Dorsolateral prefrontal cortex (tissue), 120 donors: ENCODE measurements at regions of chr10 and their contacts with region 1.

Region 1: DNA sequence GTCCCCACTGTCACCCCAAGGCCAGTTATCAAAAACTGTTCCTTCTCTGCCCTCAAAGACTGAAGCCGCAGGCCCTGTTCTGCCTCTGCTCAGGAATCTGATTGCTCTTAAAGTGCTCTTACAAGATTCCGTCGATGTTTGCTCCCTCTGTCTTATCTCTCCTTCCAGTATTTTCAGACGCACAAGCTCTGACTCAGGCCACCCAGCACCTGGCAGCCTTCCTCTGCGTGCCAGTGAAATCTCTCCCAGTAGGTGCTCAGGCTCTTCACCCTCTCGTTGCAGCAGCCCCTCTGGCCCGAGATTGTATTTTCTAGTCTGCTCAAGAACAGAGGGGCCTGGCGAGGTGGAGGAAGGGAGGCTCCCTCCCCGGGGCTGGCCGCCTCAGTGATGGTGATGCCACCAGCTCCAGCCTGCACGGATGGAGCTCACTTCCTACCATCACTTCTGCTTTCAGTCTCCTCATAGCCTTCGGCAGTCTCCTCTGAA is 276.2 kb downstream of the USP6NL start:
- DNase-seq: no peak
- H3K4me3 ChIP-seq: peak overlapping the region in 1 of 59 donors; percentile 17
- H3K27ac ChIP-seq: peak overlapping the region in 43 of 59 donors; percentile 2 to 79 (median 61)
- H3K27me3 ChIP-seq: no peaks in the 10 kb centered on the region
- CTCF ChIP-seq: no peak

Region 2: DNA sequence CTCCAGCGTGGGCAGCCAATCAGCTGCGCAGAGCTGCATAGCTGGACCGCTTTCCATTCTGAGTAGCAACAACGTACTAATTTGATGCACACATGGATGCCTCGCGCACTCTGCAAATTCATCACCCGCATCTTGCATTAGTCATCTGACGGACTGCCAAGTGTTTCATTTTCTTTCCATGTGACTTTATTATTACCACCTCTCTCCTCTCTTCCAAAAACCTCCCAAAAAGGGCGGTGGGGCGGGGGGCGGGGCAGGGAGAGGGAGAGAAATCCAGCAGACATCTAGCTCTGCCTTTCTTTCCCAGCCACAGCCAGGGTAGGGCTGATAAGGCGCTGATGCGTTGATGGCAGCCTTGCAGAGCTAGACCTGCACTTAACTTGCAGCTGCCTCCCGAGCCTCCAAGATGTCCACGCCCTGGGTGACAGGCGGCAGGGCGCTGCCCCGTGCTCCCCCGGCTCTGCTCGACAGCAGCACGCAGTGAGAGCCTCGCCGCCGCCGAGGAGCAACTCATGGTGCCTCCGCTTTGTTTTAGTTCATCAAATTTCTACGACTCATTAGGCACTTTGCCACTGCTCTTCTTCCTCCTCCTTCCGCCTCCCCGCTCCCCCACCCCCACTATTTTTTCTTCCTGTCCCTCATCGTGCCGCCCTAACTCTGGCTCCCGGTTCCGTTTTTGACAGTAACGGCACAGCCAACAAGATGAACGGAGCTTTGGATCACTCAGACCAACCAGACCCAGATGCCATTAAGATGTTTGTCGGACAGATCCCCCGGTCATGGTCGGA is 170.2 kb before region 1 on chr10:
- intact Hi-C with region 1: loop called in 1 of 2 experiments (anchors 5 kb)
- DNase-seq: peak; percentile 42 to 86 (median 80)
- H3K4me3 ChIP-seq: peak overlapping the region; percentile 35 to 85 (median 73)
- H3K27ac ChIP-seq: peak overlapping the region in 58 of 59 donors; percentile 14 to 95 (median 83)
- H3K27me3 ChIP-seq: peaks cover 0 to 21% (median 0%) of the 10 kb centered on the region in 45 donors
- CTCF ChIP-seq: no peak

Region 3: GRCh38 chr10:11367505-11367904 is 32.3 kb after region 1 on chr10:
- intact Hi-C with region 1: no loop called
- DNase-seq: no peak
- H3K4me3 ChIP-seq: no peak overlapping the region
- H3K27ac ChIP-seq: no peak overlapping the region
- H3K27me3 ChIP-seq: peaks cover 0 to 2% (median 0%) of the 10 kb centered on the region in 45 donors
- CTCF ChIP-seq: no peak